GM18951 (cell line): ENCODE measurements at regions of chr1 and their contacts with region 1.

Region 1: DNA sequence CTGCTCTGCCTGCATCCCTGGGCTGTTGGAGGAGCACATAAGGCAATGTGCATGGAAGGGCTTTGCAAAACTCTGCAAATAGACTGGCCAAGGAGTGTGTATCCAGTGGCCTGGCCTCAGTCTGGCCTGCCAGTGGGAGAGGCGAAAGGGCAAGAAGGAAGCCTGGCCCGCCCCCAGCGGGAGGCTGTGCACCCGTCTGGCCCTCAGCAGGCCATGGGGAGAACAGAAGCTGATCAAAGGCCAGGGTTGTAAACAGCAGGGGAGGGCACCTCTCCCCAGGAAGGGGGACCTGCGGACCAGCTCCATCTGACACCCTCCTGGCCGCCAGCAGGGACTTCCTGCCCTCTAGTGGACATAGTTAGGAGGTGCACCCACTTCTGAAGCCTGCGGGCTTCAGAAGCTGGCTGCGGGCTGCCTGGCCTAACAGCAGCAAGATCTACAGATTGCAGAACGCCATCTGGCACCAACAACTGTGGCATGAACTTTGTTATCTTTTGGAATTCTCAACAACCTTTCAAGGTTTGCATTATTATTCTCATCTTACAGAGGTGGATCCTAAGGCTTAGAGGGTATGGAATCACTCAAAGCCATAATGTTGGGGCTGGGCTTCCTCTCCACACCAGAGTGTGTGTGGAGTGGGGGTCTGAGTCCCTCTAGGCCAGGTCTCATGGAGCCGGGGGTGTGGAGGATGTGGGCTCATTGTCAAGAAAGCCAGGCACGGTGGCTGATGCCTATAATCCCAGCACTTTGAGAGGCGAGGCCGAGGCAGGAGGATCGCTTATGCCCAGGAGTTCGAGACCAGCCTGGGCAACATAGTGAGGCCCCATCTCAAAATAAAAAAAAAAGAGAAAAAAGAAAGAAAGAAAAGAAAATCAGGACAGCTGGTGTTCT is 18.9 kb upstream of the CDK18 start:
- POLR2A ChIP-seq: no peak

Region 2: GRCh38 chr1:205396967-205397616 is 88.5 kb before region 1 on chr1:
- in situ Hi-C with region 1: loop called (anchors 5 kb)
- POLR2A ChIP-seq: no peak

Region 3: DNA sequence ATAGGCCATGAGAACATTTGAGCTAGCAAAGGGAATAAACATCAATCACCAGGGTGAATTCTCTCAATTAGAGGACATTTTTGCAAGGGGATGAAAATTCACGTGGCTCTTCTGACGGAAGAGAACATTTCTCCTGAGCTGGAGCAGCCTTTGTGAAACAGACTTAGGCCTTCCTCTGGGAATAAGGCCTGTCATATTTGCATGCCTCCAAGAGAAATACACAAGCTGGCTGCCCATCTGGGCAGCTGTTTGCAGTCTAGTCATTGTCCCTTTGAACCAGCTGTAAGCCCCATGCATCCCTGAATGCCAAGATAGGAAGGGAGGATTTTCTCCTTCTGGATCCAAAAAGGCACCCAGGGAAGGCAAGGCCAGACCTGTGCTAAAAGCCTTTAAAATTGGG is 69.3 kb before region 1 on chr1:
- in situ Hi-C with region 1: no loop called
- POLR2A ChIP-seq: no peak